Activated naive CD4-positive, alpha-beta T cell treated with anti-CD3 and anti-CD28 coated beads for 36 hours (primary cell): ENCODE measurements at regions of chr5 and their contacts with region 1.

Region 1: GRCh38 chr5:177454397-177455035 is 7.9 kb downstream of the PRR7 start:
- DNase-seq: peak; percentile 91
- H3K4me3 Mint-ChIP-seq: peak overlapping the region; percentile 79
- H3K27ac Mint-ChIP-seq: no peak overlapping the region
- H3K4me1 Mint-ChIP-seq: peaks cover 20% of the 10 kb centered on the region
- H3K27me3 Mint-ChIP-seq: no peaks in the 10 kb centered on the region

Region 2: DNA sequence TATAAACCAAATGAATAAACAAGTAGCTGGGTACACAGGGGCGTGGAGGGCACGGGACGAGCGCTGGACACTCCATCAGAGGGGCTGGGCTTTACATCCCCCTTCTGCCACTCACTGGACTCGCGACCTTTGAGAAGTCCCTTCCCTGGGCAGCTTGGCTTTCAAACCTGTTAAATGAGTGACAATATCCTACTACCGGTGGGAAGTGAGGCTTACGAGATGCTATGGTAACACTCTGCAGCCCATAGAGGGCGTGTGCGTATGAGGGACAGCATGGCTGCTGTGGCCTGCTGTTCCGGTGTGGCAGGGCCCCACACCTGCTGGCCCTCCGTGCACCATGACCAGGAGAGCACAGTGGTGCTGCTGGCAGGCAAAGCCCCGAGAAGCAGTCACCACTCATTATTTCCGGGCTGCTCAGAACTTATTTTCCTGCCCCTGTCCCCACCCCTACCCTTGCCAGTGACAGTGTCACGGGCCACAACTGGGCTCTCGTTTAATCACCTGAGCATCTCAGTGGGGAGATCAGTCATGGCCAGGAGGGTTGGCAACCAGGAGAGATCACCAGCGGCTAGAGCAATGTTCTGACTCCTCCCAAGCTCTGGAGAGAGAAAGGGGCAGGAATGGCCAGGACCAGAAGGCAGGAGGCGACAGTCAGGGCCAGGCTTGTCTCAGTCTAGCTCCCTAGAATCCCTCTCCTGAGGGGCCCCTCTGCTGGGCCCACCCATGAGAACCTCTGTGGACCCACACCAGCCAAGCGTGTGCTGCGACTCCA is 1048.7 kb before region 1 on chr5:
- CTCF ChIA-PET with region 1: no interaction called
- intact Hi-C with region 1: no loop called
- DNase-seq: no peak
- H3K4me3 Mint-ChIP-seq: no peak overlapping the region
- H3K27ac Mint-ChIP-seq: no peak overlapping the region
- H3K4me1 Mint-ChIP-seq: peaks cover under 1% of the 10 kb centered on the region
- H3K27me3 Mint-ChIP-seq: no peaks in the 10 kb centered on the region

Region 3: DNA sequence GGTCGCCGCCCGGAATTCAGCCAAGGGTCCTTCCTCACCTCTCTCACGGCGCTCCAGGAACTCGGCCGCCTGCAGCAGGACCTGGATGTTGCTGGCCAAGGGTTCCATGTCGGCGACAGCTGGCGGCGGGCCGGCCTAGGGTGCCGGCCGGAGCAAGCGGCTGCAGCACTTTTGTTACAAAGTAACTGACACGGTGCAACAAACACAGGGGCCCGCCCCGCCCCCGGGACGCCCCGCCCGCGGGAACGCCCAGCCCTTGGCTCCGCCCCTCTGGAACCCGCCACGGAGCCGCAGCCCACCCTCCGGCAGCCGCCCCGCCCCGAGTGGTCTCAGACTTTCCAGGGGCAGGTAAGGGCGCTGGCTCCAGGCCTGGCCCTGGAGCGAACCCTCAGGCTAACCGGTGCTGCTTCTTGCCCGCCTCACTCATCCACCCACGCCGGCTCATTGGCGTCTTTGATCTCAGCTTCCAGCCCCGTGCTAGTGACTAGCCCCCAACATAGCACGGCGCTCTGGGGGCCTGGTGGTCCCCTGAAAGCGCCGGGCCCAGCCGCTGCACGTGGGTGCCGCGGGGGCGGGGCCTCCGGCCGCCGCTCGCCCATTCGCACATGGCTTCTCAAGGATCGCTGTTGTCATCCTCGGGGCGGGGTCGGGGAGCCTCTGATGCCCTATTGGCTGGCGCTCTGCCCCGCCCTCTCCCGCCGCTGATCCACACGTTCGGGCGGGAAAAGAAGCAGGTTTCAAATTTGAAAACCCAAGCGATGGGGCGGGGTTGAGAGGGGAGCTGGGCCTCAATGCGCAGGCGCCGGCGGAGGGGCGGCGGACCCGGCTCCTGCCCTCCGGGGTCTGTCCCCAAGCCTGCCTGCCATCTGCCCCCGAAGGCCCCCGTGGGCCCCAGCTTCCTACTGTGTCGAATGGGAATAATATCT is 142.5 kb before region 1 on chr5 and contains the start of gene MXD3:
- CTCF ChIA-PET with region 1: interaction called, 21 read pairs
- intact Hi-C with region 1: loop called (anchors 1 kb)
- DNase-seq: peak; percentile 99
- H3K4me3 Mint-ChIP-seq: peak within 1 kb of the TSS; percentile 97
- H3K27ac Mint-ChIP-seq: peak within 1 kb of the TSS; percentile 82
- H3K4me1 Mint-ChIP-seq: peaks cover 20% of the 10 kb centered on the region
- H3K27me3 Mint-ChIP-seq: peaks cover 3% of the 10 kb centered on the region
- total RNA-seq, gene MXD3: 45.0 to 51.7 TPM

Region 4: DNA sequence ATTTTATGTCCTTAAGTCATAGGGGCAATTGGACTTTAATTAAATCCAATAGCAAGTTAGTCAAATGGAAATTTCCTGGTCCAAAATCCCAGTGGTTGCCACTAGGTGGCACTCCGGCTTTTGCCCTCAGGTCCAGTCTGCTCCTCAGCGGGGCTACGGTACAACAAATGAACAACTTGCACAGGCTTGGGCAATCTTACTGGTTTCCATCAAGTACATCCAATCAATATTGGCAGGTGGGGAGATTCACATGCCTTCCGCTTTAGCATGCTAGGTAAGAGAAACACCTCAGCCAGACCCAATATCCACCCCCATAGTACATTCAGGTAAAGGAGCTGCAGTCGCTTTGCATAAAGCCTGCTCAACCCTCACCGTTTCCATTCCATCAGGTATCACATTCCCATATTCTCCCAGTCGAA is 136.5 kb before region 1 on chr5:
- CTCF ChIA-PET with region 1: interaction called, 7 read pairs
- intact Hi-C with region 1: loop called (anchors 1 kb)
- DNase-seq: peak; percentile 90
- H3K4me3 Mint-ChIP-seq: no peak overlapping the region
- H3K27ac Mint-ChIP-seq: no peak overlapping the region
- H3K4me1 Mint-ChIP-seq: peaks cover 19% of the 10 kb centered on the region
- H3K27me3 Mint-ChIP-seq: no peaks in the 10 kb centered on the region

Region 5: DNA sequence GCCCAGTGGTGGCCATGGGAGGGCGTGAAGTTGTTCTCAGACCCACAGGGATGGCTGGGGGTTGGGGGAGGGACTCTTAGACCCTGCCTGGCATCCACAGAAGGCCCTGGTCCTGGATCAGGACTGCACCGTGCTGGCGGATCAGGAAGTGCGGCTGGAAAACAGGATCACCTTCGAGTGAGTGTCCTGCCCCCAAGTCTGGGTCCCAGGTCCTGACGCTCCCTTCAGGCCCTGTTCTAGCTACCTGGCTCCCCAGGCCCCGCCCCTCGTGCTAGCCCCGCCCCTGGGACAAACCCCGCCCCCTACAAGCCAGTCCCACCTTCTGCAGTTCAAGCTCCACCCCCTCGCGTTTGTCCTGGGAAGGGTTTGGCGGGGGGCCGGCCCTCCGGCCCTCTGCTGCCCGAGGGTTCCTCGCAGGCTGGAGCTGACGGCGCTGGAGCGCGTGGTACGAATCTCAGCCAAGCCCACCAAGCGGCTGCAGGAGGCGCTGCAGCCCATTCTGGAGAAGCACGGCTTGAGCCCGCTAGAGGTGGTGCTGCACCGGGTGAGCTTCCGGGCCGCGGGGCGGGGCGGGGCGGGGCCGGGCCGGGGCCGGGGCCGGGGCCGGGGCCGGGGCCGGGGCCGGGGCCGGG is 83.9 kb before region 1 on chr5:
- CTCF ChIA-PET with region 1: interaction called, 10 read pairs
- intact Hi-C with region 1: no loop called
- DNase-seq: peak; percentile 75
- H3K4me3 Mint-ChIP-seq: peak overlapping the region; percentile 74
- H3K27ac Mint-ChIP-seq: no peak overlapping the region
- H3K4me1 Mint-ChIP-seq: peaks cover 70% of the 10 kb centered on the region
- H3K27me3 Mint-ChIP-seq: no peaks in the 10 kb centered on the region

Region 6: GRCh38 chr5:177431317-177432142 is 23.0 kb before region 1 on chr5:
- CTCF ChIA-PET with region 1: interaction called, 21 read pairs
- intact Hi-C with region 1: loop called (anchors 1 kb)
- DNase-seq: peak; percentile 79
- H3K4me3 Mint-ChIP-seq: peak overlapping the region; percentile 95
- H3K27ac Mint-ChIP-seq: peak overlapping the region; percentile 95
- H3K4me1 Mint-ChIP-seq: peaks cover 74% of the 10 kb centered on the region
- H3K27me3 Mint-ChIP-seq: no peaks in the 10 kb centered on the region

Region 7: DNA sequence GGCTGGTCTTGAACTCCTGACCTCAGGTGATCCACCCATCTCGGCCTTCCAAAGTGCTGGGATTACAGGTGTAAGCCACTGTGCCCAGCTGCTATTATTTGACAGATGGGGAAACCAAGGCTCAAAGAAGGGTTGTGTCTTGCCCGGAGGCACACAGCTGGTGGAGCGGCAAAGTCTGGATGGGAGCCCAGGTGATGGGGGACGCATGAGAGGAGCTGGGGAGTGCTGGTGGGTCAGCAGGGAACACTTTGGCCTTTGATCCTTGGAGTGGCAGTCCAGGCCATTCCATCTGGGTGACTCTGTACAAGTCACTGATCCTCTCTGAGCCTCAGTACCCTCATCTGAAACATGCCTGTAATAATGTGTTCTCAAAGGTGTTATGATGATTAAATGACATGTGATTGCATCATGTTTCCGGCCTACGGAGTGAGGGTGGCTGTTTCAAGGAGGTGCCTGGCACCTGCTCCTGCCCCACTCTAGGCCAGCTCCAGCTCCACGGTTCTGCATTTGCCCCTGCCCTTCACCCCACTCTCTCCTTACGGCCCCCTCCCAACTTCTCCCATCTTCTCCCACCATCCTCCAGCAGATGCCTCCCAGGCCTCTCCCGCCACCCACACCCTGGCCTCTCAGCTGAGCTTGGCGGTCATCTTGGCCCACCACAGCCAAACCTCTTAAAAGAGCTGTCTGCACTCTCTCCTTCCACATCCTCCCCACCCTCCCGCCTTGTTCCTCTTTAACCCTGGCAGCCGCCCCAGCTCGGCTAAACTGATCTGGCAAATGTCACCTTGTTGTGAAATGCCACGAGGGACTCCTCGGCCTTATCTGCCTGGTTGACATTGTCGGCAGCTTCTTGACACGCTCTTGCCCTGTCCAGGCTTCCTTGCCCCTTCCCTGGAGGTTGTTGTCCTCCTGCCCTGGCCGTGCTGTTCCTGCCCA is 24.5 kb after region 1 on chr5:
- CTCF ChIA-PET with region 1: interaction called, 10 read pairs
- intact Hi-C with region 1: loop called (anchors 2 kb)
- DNase-seq: peak; percentile 73
- H3K4me3 Mint-ChIP-seq: no peak overlapping the region
- H3K27ac Mint-ChIP-seq: peak overlapping the region; percentile 94
- H3K4me1 Mint-ChIP-seq: peaks cover 51% of the 10 kb centered on the region
- H3K27me3 Mint-ChIP-seq: peaks cover under 1% of the 10 kb centered on the region